Ascending aorta (tissue), 2 donors: ENCODE measurements at regions of chr1 and their contacts with region 1.

Region 1: DNA sequence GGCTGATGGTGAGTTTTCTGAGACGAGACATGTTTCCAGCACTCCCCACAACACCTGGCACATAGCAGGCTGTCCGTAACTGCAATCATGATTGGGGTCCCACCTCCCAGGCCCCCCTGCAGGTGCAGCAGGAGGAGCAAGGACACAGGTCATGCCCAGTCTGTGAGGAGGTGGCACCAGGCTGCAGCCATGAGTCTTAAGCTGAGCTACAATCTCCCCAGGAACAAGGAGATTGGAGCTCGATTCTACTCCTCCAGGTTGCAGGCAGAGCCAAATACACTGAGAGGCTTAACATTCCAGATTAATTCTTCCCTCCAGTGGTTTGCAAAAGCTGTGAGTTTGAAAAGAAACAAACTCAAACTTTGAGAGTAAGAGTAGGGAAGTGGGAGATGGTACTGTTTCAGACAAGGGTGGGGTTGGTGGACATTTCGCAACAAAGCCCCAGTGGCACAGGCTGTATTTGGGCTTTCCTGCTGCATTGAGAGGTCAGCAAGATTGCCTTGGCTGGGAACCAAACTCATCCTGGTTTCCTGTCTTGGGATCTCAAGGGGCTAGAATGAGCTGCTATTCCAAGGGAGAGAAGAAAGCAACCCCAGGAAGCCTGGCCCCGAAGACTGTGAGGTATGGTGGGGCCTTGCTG is 64.8 kb upstream of the GALNT2 start:
- DNase-seq: no peak
- H3K4me3 ChIP-seq: no peak overlapping the region
- H3K27ac ChIP-seq: no peak overlapping the region
- H3K4me1 ChIP-seq: peaks cover 6 to 30% of the 10 kb centered on the region in 2 donors
- H3K27me3 ChIP-seq: no peaks in the 10 kb centered on the region
- CTCF ChIP-seq: no peak

Region 2: GRCh38 chr1:229828461-229828860 is 173.8 kb before region 1 on chr1:
- intact Hi-C with region 1: loop called (anchors 5 kb)
- DNase-seq: no peak
- H3K4me3 ChIP-seq: peak overlapping the region in 1 of 2 donors; percentile 11
- H3K27ac ChIP-seq: peak overlapping the region; percentile 71 to 73
- H3K4me1 ChIP-seq: peaks cover 0 to 23% of the 10 kb centered on the region in 2 donors
- H3K27me3 ChIP-seq: no peaks in the 10 kb centered on the region
- CTCF ChIP-seq: no peak